Activated T-helper 2 cell treated with anti-CD3 and anti-CD28 coated beads, Interferon-gamma antibody, Interleukin-2, Interleukin-4, amounts not matched to agents 10 μg/mL and 5 μg/mL and 100 μg/mL, durations not matched to agents 14 hours and 24 hours and 36 hours (primary cell): ENCODE measurements at regions of chr16 and their contacts with region 1.

Region 1: GRCh38 chr16:3123986-3124886 is 10.6 kb upstream of the ZNF213 start:
- DNase-seq: peak; percentile 97
- H3K4me3 Mint-ChIP-seq: peak overlapping the region; percentile 96
- H3K27ac Mint-ChIP-seq: peak overlapping the region; percentile 92
- H3K4me1 Mint-ChIP-seq: peaks cover 34% of the 10 kb centered on the region
- H3K27me3 Mint-ChIP-seq: no peaks in the 10 kb centered on the region

Region 2: GRCh38 chr16:2987839-2988238 is 136.4 kb before region 1 on chr16:
- intact Hi-C with region 1: no loop called
- DNase-seq: no peak
- H3K4me3 Mint-ChIP-seq: no peak overlapping the region
- H3K27ac Mint-ChIP-seq: no peak overlapping the region
- H3K4me1 Mint-ChIP-seq: no peaks in the 10 kb centered on the region
- H3K27me3 Mint-ChIP-seq: peaks cover 2% of the 10 kb centered on the region

Region 3: DNA sequence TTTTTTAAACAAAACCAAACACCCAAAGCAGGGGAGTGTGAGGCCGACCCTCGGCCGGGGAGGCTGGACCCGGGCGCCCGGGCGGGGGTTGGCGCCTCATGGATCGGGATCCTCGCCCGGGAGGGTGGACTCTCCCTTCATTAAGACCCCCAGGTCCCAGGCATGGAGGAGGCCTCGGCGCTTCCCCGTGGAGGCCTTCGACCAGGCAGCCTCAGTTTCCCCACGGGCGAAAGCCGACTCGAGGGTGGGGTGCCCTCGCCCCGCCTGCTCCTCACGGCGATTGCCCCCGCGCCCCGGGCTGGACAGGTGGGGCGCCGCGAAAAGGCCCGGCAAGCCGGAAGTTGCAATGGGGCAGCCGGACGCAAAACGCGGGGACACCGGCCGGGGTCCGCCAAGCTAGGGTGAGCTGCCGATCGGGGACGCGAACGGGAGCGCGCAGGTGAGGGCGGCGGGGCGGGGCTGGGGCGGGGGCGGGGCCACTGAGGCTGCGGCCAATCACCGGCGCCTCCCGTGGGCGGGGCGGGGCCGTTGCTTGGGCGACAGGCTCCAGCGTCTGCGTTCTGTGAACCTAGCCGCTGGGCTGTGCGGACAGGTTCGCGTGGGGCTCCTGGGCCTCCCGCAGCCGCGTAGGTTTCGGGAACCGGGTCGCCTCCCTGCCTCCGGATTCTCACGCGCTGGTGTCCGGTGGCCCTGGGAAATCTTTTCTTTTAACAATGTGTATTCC is 17.9 kb before region 1 on chr16:
- intact Hi-C with region 1: loop called (anchors 1 kb)
- DNase-seq: peak; percentile 87
- H3K4me3 Mint-ChIP-seq: peak overlapping the region; percentile 84
- H3K27ac Mint-ChIP-seq: peak overlapping the region; percentile 93
- H3K4me1 Mint-ChIP-seq: peaks cover 17% of the 10 kb centered on the region
- H3K27me3 Mint-ChIP-seq: peaks cover 2% of the 10 kb centered on the region

Region 4: DNA sequence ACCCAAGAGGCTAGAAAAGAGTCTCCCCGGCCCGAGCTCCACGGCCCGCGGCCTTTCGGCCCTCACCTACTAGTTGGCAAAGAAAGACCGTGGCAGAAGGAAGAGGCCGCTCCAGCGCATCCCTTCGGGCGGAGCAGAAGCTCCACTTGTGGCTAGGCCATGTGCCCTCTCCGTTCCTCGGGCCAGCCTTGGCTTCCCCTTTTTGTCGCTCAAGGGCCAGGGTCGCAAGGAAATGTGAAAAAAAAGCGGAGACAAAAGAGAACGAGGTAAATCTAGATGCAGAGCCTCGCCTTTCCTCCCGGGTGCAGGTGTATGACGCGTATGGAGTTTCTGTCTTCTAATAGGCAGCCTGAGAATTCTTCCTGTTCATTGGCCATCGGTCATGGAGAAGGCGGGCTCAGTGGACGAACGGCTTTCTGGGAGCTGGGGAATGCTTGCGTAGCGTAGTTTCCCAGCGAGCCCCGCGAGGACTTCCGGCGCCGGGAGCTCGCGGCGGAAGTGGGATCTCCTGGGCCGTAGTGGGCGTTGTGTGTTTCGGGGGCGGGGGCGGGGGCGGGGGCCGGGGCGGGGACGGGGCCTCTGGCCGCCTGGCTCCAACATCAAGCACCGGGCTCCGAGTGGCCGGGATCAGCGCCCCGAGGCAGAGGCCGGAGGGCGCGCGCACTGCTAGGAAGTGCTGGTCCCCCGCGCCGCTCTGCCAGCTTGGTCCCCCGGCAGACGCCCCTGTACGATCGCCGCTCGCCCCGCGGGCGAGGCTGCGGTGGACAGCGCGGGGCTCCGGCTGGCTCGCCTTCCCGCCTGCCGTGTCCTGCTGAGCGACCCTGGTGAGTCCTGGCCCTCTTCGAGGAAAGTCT is 10.6 kb after region 1 on chr16 and contains the start of gene ZNF213:
- intact Hi-C with region 1: loop called (anchors 1 kb)
- DNase-seq: peak; percentile 93
- H3K4me3 Mint-ChIP-seq: peak within 1 kb of the TSS; percentile 98
- H3K27ac Mint-ChIP-seq: peak within 1 kb of the TSS; percentile 96
- H3K4me1 Mint-ChIP-seq: peaks cover 19% of the 10 kb centered on the region
- H3K27me3 Mint-ChIP-seq: no peaks in the 10 kb centered on the region
- total RNA-seq, gene ZNF213: 9.1 and 9.3 TPM in 2 replicates

Region 5: DNA sequence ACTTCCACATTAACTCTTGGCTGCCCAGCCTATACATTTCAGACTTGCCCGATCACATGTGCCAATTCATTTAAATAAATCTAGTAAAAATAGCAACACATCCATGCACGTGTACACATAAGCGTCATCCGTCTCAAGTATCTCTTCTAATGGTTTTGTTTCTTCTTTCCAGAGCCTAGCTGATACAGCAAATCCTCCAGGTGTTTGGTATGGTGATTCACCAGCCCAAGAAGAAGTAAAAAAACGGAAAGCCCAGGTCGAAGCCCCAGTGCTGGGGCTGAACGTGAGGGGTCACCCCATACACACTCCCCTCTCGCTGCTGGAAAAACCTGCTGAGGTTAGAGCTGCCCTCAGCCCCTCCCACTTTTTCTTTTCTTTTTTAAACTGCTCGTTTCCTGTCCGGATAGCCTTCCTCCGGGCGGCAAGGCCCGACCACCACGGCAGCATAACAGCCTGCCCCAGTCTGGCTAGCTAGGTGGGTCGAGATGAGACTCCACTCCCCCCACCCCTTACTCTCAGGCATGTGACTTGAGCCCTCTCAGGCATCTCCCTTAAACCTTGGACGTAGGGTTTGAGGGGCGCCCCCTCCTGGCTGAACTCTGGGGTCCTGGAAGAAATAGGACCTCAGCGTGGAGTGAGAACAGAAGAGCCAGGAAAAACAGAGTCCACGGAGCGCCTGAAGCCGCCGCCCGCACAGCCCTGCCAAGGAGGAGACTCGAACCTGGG is 49.8 kb after region 1 on chr16:
- intact Hi-C with region 1: no loop called
- DNase-seq: no peak
- H3K4me3 Mint-ChIP-seq: peak overlapping the region; percentile 67
- H3K27ac Mint-ChIP-seq: no peak overlapping the region
- H3K4me1 Mint-ChIP-seq: peaks cover 27% of the 10 kb centered on the region
- H3K27me3 Mint-ChIP-seq: peaks cover 76% of the 10 kb centered on the region